ENCODE measurements at regions of chr1 and their contacts with region 1.

Region 1: DNA sequence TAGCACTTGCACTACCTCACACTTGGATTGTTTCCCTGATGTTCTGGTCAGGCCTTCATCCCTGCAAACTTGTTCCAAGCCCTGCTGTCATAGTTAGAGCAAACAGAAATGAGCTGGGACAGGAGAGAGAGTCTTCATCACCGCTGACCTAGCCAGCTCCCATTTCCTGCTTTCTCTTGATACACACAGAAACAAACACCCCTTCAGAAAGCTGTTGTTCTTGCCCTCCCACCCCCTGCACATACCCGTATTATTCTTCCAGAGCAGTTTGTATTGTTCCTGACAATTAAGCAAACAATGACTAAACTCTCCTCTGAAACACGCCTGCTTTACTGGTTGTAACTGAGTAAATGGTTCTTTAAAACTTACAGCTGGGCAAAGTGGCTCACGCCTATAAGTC is 2.9 kb upstream of the SYT2 start:
- DNase-seq: no peak
- H3K4me3 ChIP-seq: no peak overlapping the region
- H3K27ac ChIP-seq: no peak overlapping the region
- H3K4me1 ChIP-seq: peaks cover 11 to 18% (median 17%) of the 10 kb centered on the region in 4 donors
- H3K27me3 ChIP-seq: peaks cover 0 to 44% (median 28%) of the 10 kb centered on the region in 4 donors
- CTCF ChIP-seq: no peak
- EP300 ChIP-seq: no peak
- POLR2A ChIP-seq: no peak

Region 2: GRCh38 chr1:202192770-202193613 is 520.1 kb before region 1 on chr1:
- intact Hi-C with region 1: loop called (anchors 2 kb)
- DNase-seq: no peak
- H3K4me3 ChIP-seq: peak overlapping the region; percentile 28 to 49 (median 32)
- H3K27ac ChIP-seq: no peak overlapping the region
- H3K4me1 ChIP-seq: peaks cover 7 to 16% (median 15%) of the 10 kb centered on the region in 4 donors
- H3K27me3 ChIP-seq: peaks cover 0 to 58% (median 19%) of the 10 kb centered on the region in 4 donors
- CTCF ChIP-seq: peak; percentile 74 to 90 (median 84)
- EP300 ChIP-seq: no peak
- POLR2A ChIP-seq: no peak

Region 3: DNA sequence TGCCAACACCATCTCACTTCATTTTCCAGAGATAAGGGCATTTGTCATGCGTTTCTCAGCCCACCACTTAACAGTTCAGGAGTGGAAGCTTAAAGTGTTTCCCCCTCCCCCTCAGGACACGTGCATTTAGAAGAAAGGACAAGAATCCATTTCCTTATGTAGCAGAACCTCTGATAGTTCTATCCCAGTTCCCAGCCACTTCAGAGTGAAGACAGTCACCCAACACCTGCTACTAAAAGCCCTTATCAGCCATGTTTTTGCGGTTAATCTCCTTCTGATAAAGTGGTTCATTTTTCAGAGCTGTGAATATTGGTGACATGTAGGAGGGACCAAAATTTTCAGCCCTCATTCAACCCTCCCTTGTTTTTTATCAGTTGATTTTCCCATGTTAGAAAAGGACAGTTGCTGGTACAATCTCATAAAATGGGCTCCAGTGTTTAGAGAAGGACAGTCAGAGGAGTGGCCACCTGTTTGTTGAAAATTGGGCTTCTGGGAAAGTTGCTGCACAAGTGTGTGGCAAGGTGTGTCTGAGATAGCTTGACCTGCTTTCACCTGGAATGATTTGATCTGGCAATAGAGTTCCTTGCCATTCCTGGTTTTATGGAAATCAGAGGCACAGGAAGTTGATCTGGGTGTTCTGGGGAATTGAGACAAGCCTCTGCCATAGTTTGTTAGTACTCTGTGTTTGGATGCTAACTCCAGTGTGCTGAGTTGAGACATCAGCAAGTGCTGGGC is 250.6 kb before region 1 on chr1:
- intact Hi-C with region 1: loop called (anchors 5 kb)
- DNase-seq: no peak
- H3K4me3 ChIP-seq: no peak overlapping the region
- H3K27ac ChIP-seq: peak overlapping the region in 1 of 4 donors; percentile 21
- H3K4me1 ChIP-seq: peaks cover 15 to 62% (median 46%) of the 10 kb centered on the region in 4 donors
- H3K27me3 ChIP-seq: no peaks in the 10 kb centered on the region
- CTCF ChIP-seq: no peak
- EP300 ChIP-seq: no peak
- POLR2A ChIP-seq: no peak

Region 4: DNA sequence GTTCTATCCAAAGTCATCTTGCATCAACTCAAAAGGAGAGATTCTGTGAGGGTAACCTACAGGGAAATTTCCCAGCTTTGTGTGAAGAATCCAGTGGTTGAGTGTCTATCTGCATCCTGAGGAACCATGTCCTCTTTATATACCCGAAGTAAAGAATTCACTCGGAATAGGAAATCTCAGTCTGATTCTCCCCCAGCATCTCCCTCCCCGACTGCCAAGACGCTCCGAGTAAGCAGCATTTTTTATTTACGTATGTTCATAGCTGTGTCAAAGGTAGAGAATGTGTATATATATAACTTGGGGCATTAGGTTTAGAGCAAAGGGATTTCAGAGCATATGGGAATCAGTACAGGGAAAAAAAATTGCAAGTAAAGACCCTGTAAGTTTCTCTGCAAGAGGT is 173.1 kb before region 1 on chr1:
- intact Hi-C with region 1: no loop called
- DNase-seq: no peak
- H3K4me3 ChIP-seq: peak overlapping the region; percentile 55 to 70 (median 64)
- H3K27ac ChIP-seq: peak overlapping the region; percentile 89 to 92 (median 90)
- H3K4me1 ChIP-seq: peaks cover 20 to 28% (median 26%) of the 10 kb centered on the region in 4 donors
- H3K27me3 ChIP-seq: no peaks in the 10 kb centered on the region
- CTCF ChIP-seq: no peak
- EP300 ChIP-seq: no peak
- POLR2A ChIP-seq: no peak

Region 5: GRCh38 chr1:202571347-202572339 is 141.5 kb before region 1 on chr1:
- intact Hi-C with region 1: no loop called
- DNase-seq: no peak
- H3K4me3 ChIP-seq: no peak overlapping the region
- H3K27ac ChIP-seq: peak overlapping the region; percentile 80 to 84 (median 82)
- H3K4me1 ChIP-seq: peaks cover 57 to 100% (median 100%) of the 10 kb centered on the region in 4 donors
- H3K27me3 ChIP-seq: no peaks in the 10 kb centered on the region
- CTCF ChIP-seq: peak; percentile 68 to 84 (median 72)
- EP300 ChIP-seq: no peak
- POLR2A ChIP-seq: no peak

Region 6: DNA sequence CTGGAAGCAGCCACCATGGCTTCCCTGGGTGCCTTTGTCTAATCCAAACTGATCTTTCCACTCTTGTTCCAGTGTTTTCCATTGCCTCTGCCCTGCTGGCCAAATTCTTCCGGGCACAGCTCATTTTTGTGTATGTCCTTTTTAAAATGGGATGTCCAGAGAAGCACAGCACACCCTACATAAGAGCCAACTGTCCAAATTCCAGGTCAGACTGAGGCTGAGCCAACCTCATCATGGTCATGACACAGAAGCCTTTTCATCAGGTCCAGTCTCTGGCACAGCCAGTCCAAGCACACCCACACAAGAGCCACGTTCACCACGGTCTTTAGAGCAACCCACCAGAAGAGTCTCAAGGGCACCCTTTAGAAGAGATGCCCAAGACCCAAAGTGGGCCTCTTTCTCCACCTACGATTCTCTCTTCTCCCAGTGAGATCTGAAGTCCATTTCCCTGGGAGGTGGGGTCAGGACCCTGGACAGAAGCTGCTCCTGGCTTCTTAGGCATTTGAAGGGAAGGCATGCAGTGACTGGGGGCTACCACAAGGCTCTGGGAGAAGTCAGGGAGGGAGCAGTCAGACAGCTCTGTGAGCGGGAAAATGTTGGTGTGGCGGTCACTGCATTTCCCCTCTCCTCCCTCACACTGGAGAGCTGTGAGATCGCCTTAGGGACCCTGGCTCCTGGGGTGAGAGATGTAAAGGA is 56.0 kb before region 1 on chr1:
- intact Hi-C with region 1: no loop called
- DNase-seq: no peak
- H3K4me3 ChIP-seq: no peak overlapping the region
- H3K27ac ChIP-seq: no peak overlapping the region
- H3K4me1 ChIP-seq: no peaks in the 10 kb centered on the region
- H3K27me3 ChIP-seq: peaks cover 0 to 53% (median 0%) of the 10 kb centered on the region in 4 donors
- CTCF ChIP-seq: no peak
- EP300 ChIP-seq: no peak
- POLR2A ChIP-seq: no peak

Region 7: DNA sequence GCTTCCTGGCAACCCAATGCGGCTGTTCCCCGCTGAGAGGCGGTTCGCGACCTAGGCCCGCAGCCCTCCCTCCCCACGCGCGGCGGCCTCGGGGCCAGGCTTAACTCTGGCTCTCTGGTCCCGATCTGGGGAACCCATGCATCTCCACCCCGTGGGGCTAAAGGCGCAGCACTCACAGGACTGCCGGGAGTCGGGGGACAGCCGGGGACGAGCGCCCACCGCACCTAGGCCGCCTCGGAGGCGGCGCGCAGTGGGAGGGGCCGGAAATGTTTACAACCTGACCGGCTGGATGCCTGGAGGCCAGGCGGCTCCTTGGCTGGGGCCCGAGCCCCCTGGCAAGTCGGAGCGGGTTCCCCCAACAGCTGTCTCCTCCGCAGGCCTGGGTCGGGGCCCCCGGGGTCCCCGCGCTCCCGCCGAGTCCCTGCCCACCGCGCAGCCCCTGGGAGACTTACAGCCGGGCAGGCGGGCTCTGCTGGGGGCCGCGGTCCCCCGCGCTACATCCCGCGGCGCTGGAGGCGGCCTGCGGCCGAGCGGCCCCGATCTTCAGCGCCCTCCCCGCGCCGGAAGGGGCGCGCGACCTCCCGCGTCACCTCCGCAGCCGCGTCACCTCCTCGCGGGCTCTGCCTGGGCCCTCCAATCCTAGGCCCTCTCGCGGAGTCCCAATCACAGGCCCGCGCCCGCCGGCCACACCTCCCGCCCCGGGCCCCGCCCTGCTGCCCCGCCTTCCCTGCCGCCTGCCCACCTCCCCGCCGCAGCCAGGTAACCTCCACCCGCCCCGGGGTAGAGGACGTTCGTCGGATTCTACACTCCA is 244.8 kb after region 1 on chr1 and contains the start of gene ADIPOR1:
- intact Hi-C with region 1: no loop called
- DNase-seq: peak; percentile 96
- H3K4me3 ChIP-seq: peak within 1 kb of the TSS; percentile 87 to 100 (median 95)
- H3K27ac ChIP-seq: peak within 1 kb of the TSS; percentile 90 to 97 (median 95)
- H3K4me1 ChIP-seq: peaks cover 47 to 54% (median 50%) of the 10 kb centered on the region in 4 donors
- H3K27me3 ChIP-seq: peaks cover 0 to 4% (median 0%) of the 10 kb centered on the region in 4 donors
- CTCF ChIP-seq: peak in 1 of 3 experiments; percentile 18
- EP300 ChIP-seq: no peak
- POLR2A ChIP-seq: peak; percentile 94
- total RNA-seq, gene ADIPOR1: 53.6 to 93.4 (median 70.0) TPM